GM12878 (cell line): ENCODE measurements at regions of chr11 and their contacts with region 1.

Region 1: GRCh38 chr11:18395735-18396504 is 1.6 kb downstream of the LDHA start:
- DNase-seq: peak; percentile 86
- ATAC-seq: peak; percentile 85
- H3K4me3 ChIP-seq: peak overlapping the region; percentile 97
- H3K27ac ChIP-seq: peak overlapping the region; percentile 95
- H3K4me1 ChIP-seq: peaks cover 15% of the 10 kb centered on the region
- H3K27me3 ChIP-seq: no peaks in the 10 kb centered on the region
- CTCF ChIP-seq: no peak
- EP300 ChIP-seq: no peak
- POLR2A ChIP-seq: peak; percentile 83
- RAD21 ChIP-seq: no peak

Region 2: DNA sequence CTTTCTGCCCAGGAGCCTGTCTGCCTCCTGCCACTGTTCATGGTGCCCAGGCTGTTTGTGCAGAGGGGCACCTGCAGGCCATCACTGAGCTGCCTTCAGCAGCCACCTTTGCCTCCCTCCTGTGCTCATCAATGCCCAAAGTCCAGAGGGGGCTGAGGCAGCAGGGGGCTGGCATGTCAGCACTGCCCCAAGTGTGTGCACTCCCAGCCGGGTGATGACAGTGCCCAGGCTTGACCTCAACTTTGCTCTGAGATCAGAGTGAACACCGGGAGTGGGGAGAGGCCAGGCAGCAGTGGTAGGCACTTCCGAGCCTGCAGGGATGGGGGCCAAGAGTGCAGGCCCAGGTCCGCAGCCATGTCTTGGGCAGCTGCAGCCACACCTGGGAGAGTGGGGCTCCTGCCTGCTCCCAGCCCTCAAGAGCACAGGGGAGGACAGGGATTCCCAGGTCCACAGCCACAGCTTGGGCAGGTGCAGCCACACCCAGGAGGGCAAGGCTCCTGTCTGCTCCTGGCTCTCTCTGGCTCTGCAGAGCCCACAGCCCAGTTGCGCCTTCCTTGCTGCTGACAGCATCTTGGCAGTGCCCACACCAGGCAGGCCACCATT is 174.5 kb before region 1 on chr11:
- CTCF ChIA-PET with region 1: no interaction called
- POLR2A ChIA-PET with region 1: no interaction called
- RAD21 ChIA-PET with region 1: no interaction called
- SMC1A ChIA-PET with region 1: no interaction called
- in situ Hi-C with region 1: no loop called
- intact Hi-C with region 1: no loop called
- DNase-seq: no peak
- ATAC-seq: no peak
- H3K4me3 ChIP-seq: no peak overlapping the region
- H3K27ac ChIP-seq: no peak overlapping the region
- H3K4me1 ChIP-seq: no peaks in the 10 kb centered on the region
- H3K27me3 ChIP-seq: no peaks in the 10 kb centered on the region
- CTCF ChIP-seq: no peak
- EP300 ChIP-seq: no peak
- POLR2A ChIP-seq: no peak
- RAD21 ChIP-seq: no peak

Region 3: DNA sequence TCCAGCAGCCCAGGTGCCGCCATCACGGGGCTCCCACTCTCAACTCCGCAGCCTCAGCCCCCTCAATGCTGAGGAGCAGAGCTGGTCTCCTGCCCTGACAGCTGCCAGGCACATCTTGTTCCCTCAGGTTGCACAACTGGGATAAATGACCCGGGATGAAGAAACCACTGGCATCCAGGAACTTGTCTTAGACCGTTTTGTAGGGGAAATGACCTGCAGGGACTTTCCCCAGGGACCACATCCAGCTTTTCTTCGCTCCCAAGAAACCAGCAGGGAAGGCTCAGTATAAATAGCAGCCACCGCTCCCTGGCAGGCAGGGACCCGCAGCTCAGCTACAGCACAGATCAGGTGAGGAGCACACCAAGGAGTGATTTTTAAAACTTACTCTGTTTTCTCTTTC is 130.0 kb before region 1 on chr11 and contains the start of gene SAA1:
- CTCF ChIA-PET with region 1: no interaction called
- POLR2A ChIA-PET with region 1: no interaction called
- RAD21 ChIA-PET with region 1: no interaction called
- SMC1A ChIA-PET with region 1: no interaction called
- in situ Hi-C with region 1: no loop called
- intact Hi-C with region 1: no loop called
- DNase-seq: no peak
- ATAC-seq: no peak
- H3K4me3 ChIP-seq: no peak within 1 kb of the TSS
- H3K27ac ChIP-seq: no peak within 1 kb of the TSS
- H3K4me1 ChIP-seq: peaks cover 20% of the 10 kb centered on the region
- H3K27me3 ChIP-seq: no peaks in the 10 kb centered on the region
- CTCF ChIP-seq: no peak
- EP300 ChIP-seq: no peak
- POLR2A ChIP-seq: no peak
- RAD21 ChIP-seq: no peak
- polyA plus RNA-seq, gene SAA1: not detected

Region 4: DNA sequence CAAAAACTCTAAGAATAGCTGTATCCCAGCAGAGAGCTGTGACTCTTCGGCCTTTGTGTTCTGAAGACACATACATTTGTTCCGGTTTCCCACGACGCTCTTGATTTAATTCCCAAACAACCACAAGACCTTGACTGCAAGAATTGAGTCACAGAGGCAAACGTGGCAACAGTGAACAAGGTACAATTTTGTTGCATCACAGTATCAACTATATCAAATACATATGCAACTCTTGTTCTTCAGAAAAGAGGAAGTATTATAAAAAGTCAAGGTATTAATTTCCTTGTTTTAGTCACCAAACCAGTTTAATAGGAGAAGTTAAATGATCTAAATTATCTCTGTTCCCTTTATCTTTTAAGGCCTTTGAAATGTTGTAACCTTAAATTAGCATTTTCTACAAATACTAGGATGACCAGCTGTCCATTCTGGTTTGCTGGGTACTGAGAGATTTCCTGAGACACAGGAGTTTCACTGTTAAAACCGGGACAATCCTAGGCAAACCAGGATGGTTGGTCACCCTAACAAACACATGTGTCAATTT is 85.0 kb before region 1 on chr11:
- CTCF ChIA-PET with region 1: interaction called, 7 read pairs
- POLR2A ChIA-PET with region 1: no interaction called
- RAD21 ChIA-PET with region 1: interaction called, 9 read pairs
- SMC1A ChIA-PET with region 1: interaction called, 13 read pairs
- in situ Hi-C with region 1: no loop called
- intact Hi-C with region 1: no loop called
- DNase-seq: peak; percentile 70
- ATAC-seq: peak; percentile 84
- H3K4me3 ChIP-seq: no peak overlapping the region
- H3K27ac ChIP-seq: peak overlapping the region; percentile 47
- H3K4me1 ChIP-seq: peaks cover 22% of the 10 kb centered on the region
- H3K27me3 ChIP-seq: no peaks in the 10 kb centered on the region
- CTCF ChIP-seq: no peak
- EP300 ChIP-seq: peak in 1 of 2 experiments; percentile 7; a peak in 1 of 4 replicates
- POLR2A ChIP-seq: no peak
- RAD21 ChIP-seq: no peak

Region 5: DNA sequence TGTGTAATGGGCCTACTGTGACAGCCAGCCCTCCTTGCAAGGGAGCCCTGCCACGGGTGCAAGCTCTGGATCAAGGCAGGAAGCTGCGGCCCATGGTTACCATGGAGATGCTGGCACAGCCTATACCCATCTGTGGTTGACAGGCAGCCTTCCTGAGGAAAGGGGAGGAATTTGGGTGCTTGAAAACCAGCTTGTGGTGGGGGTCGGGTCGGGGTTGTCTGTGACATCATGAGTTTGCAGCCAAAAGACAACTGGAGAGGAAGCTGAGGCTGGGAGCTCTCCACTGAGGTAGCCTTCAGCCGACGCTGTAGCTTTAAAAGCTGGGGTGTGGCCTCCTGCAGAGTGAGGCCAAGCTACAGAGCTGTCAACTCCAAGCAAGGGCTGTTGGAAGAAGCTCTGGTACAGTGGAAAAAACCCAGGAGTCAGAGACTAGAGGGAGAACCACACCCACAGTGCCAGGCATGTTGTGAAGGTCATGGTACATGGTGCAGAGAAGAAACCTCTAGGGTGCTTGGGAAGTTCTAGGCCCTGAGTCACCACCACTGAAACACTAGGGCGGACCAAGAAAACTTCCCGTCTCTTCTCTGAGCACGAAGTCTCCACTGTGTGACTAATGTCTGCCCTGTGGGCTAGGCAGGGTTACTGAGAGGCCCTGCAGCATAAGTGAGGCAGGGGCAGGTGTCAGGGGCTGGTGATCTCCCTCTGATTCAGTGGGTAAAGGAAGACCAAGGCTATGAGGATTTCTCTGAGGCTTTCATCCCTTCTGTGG is 12.3 kb before region 1 on chr11:
- CTCF ChIA-PET with region 1: interaction called, 8 read pairs
- POLR2A ChIA-PET with region 1: interaction called, 95 read pairs
- RAD21 ChIA-PET with region 1: interaction called, 35 read pairs
- SMC1A ChIA-PET with region 1: interaction called, 83 read pairs
- in situ Hi-C with region 1: no loop called
- intact Hi-C with region 1: loop called (anchors 1 kb)
- DNase-seq: peak; percentile 70
- ATAC-seq: peak; percentile 93
- H3K4me3 ChIP-seq: 0 out of 2 replicates have a peak overlapping the region, but pooled peaks have one; percentile 22
- H3K27ac ChIP-seq: peak overlapping the region; percentile 98
- H3K4me1 ChIP-seq: peaks cover 22% of the 10 kb centered on the region
- H3K27me3 ChIP-seq: no peaks in the 10 kb centered on the region
- CTCF ChIP-seq: no peak
- EP300 ChIP-seq: no peak; a peak in 1 of 4 replicates
- POLR2A ChIP-seq: peak; percentile 71; the same call in 1 of the 2 replicates
- RAD21 ChIP-seq: no peak

Region 6: DNA sequence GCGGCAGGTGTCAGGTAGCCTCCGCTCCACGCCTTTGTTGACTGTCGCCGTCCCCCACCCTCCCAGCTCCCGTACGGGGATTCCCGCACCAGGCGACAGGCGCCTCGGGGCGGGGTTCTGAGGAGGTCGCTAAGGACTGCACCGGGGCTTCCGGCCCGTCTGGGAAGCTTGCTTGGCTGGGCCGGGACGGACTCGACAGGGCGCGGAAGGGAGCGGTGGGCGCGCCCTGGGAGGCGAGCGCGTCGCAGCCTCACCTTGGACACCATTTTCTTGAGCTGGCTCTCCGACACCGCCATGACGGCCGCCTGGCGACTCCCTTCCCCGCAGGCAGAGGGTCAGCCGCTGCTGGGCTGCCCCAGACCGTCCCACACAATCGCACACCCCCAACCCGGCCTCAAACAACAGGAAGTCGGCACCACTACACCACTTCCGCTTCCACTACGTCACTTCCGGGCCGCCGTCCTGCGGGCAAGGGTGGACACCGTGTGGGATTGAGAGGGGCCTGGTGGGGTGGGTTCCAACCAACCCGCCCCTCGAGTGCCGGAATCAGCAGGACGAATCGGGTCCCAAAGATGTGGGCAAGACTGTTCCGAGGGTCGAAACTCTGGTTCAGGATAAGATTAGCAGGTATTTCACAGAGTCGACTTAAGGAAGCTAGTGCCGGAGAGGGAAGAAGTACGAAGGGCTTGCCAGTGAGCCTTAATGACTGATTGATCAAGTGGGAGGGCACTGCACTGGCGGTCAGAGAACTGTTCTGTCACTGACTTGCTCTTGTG is 130.8 kb after region 1 on chr11 and contains the start of gene TSG101:
- CTCF ChIA-PET with region 1: no interaction called
- POLR2A ChIA-PET with region 1: interaction called, 13 read pairs
- RAD21 ChIA-PET with region 1: interaction called, 3 read pairs
- SMC1A ChIA-PET with region 1: interaction called, 7 read pairs
- in situ Hi-C with region 1: no loop called
- intact Hi-C with region 1: loop called (anchors 10 kb)
- DNase-seq: peak; percentile 69
- ATAC-seq: peak; percentile 91
- H3K4me3 ChIP-seq: peak within 1 kb of the TSS; percentile 95
- H3K27ac ChIP-seq: peak within 1 kb of the TSS; percentile 91
- H3K4me1 ChIP-seq: no peaks in the 10 kb centered on the region; the same call in 1 of the 2 replicates
- H3K27me3 ChIP-seq: no peaks in the 10 kb centered on the region
- CTCF ChIP-seq: no peak
- EP300 ChIP-seq: peak in 1 of 2 experiments; percentile 15; a peak in 1 of 4 replicates
- POLR2A ChIP-seq: peak; percentile 98
- RAD21 ChIP-seq: no peak
- polyA plus RNA-seq, gene TSG101: 22.3 to 37.6 TPM

Region 7: DNA sequence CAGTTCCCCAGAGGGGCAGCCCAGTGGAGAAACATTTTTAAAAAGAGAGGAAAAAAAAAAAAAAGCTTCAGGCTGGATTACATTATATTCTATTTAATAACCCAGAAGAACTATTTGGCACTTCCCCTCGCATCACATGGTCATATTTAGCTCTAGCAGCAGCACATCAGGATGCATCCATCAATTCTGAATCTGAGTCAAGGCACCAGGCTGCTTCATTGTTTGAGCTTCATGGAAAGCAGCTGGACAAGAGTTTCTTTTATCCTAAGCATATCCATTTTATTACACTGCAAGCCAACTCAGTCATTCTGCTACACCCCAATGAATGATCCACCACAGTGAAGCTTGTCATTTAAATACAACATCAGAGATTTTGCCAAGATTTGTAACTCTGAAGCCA is 228.2 kb after region 1 on chr11:
- CTCF ChIA-PET with region 1: no interaction called
- POLR2A ChIA-PET with region 1: no interaction called
- RAD21 ChIA-PET with region 1: no interaction called
- SMC1A ChIA-PET with region 1: no interaction called
- in situ Hi-C with region 1: no loop called
- intact Hi-C with region 1: no loop called
- DNase-seq: no peak
- ATAC-seq: no peak
- H3K4me3 ChIP-seq: no peak overlapping the region
- H3K27ac ChIP-seq: no peak overlapping the region
- H3K4me1 ChIP-seq: 0 out of 2 replicates have a peak, but pooled peaks cover 6% of the 10 kb centered on the region
- H3K27me3 ChIP-seq: no peaks in the 10 kb centered on the region
- CTCF ChIP-seq: no peak
- EP300 ChIP-seq: no peak
- POLR2A ChIP-seq: no peak
- RAD21 ChIP-seq: no peak